Activated naive CD8-positive, alpha-beta T cell treated with anti-CD3 and anti-CD28 coated beads, Interleukin-2, amount 10 ng/mL, durations not matched to agents 7 days and 5 days (primary cell): ENCODE measurements at regions of chr1 and their contacts with region 1.

Region 1: DNA sequence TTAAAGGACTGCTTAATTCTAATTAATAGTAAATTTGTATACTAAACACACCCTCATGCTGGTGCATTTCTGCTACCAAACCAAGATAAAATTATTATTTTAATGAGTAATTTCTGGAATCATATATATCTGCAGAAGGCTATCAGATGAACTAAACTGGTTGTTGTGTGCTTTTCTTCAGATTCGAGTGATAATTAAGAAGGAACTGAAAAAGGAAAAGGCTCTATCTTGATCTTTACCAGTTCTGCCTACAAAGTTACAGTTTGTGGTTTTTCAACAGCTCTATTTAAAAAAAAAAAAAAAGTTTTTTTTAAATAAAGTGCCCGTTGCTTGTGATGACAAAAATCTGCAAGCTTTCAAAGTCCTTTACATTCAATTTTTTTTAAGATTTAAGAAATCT is 13.7 kb downstream of the DENND1B start:
- DNase-seq: no peak
- ATAC-seq: no peak
- H3K4me3 Mint-ChIP-seq: no peak overlapping the region
- H3K27ac Mint-ChIP-seq: no peak overlapping the region
- H3K4me1 Mint-ChIP-seq: peaks cover 23% of the 10 kb centered on the region
- H3K27me3 Mint-ChIP-seq: no peaks in the 10 kb centered on the region

Region 2: GRCh38 chr1:197745911-197746310 is 15.7 kb before region 1 on chr1:
- POLR2A ChIA-PET with region 1: no interaction called
- DNase-seq: no peak
- ATAC-seq: no peak
- H3K4me3 Mint-ChIP-seq: no peak overlapping the region
- H3K27ac Mint-ChIP-seq: no peak overlapping the region
- H3K4me1 Mint-ChIP-seq: peaks cover 10% of the 10 kb centered on the region
- H3K27me3 Mint-ChIP-seq: no peaks in the 10 kb centered on the region

Region 3: GRCh38 chr1:197775282-197776262 is 14.0 kb after region 1 on chr1 and contains the start of gene DENND1B:
- POLR2A ChIA-PET with region 1: interaction called, 15 read pairs
- DNase-seq: peak; percentile 88
- ATAC-seq: peak; percentile 65
- H3K4me3 Mint-ChIP-seq: peak within 1 kb of the TSS; percentile 93
- H3K27ac Mint-ChIP-seq: peak within 1 kb of the TSS; percentile 99
- H3K4me1 Mint-ChIP-seq: peaks cover 53% of the 10 kb centered on the region
- H3K27me3 Mint-ChIP-seq: no peaks in the 10 kb centered on the region
- total RNA-seq, gene DENND1B: 25.5 to 25.9 TPM